Caco-2 (cell line): ENCODE measurements at regions of chr2 and their contacts with region 1.

Region 1: DNA sequence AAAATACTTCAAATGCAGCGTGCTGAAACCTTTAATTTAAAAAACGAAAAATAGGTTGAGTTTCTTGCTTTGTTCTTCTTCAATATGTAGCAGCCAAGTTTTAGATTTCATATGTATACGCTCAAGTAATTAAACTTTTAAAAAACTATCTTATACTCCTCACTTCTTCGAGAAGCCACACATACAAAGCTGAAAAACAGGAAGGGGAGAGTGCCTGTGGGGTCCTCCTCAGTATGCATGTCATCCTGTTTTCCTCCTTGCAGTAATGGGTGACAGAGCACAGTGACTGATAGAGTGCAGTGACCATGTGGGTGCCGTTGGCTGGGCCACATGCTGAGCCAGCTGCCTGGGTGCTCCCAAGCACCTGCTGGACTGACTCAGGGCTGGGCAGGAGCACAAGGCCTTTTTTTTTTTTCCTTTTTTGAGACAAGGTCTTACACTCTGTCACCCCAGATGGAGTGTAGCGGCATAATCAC is 33.3 kb downstream of the UXS1 start:
- DNase-seq: no peak
- H3K4me3 ChIP-seq: no peak overlapping the region
- H3K4me3 Mint-ChIP-seq: no peak overlapping the region
- H3K27ac Mint-ChIP-seq: peak overlapping the region; percentile 91
- H3K4me1 ChIP-seq: peaks cover 51% of the 10 kb centered on the region
- H3K4me1 Mint-ChIP-seq: peaks cover 46% of the 10 kb centered on the region
- H3K27me3 ChIP-seq: no peaks in the 10 kb centered on the region
- H3K27me3 Mint-ChIP-seq: no peaks in the 10 kb centered on the region
- CTCF ChIP-seq: no peak

Region 2: GRCh38 chr2:106124905-106125405 is 35.9 kb before region 1 on chr2:
- CTCF ChIA-PET with region 1: no interaction called
- POLR2A ChIA-PET with region 1: no interaction called
- intact Hi-C with region 1: loop called (anchors 5 kb)
- DNase-seq: peak; percentile 57 to 60
- H3K4me3 ChIP-seq: no peak overlapping the region
- H3K4me3 Mint-ChIP-seq: no peak overlapping the region
- H3K27ac Mint-ChIP-seq: peak overlapping the region; percentile 69
- H3K4me1 ChIP-seq: peaks cover 58% of the 10 kb centered on the region
- H3K4me1 Mint-ChIP-seq: peaks cover 50% of the 10 kb centered on the region
- H3K27me3 ChIP-seq: no peaks in the 10 kb centered on the region
- H3K27me3 Mint-ChIP-seq: no peaks in the 10 kb centered on the region
- CTCF ChIP-seq: no peak

Region 3: GRCh38 chr2:106180602-106181001 is 19.8 kb after region 1 on chr2:
- CTCF ChIA-PET with region 1: no interaction called
- POLR2A ChIA-PET with region 1: no interaction called
- intact Hi-C with region 1: loop called (anchors 1 kb)
- DNase-seq: no peak
- H3K4me3 ChIP-seq: no peak overlapping the region
- H3K4me3 Mint-ChIP-seq: no peak overlapping the region
- H3K27ac Mint-ChIP-seq: no peak overlapping the region
- H3K4me1 ChIP-seq: peaks cover 27% of the 10 kb centered on the region
- H3K4me1 Mint-ChIP-seq: peaks cover 18% of the 10 kb centered on the region
- H3K27me3 ChIP-seq: no peaks in the 10 kb centered on the region
- H3K27me3 Mint-ChIP-seq: no peaks in the 10 kb centered on the region
- CTCF ChIP-seq: no peak

Region 4: DNA sequence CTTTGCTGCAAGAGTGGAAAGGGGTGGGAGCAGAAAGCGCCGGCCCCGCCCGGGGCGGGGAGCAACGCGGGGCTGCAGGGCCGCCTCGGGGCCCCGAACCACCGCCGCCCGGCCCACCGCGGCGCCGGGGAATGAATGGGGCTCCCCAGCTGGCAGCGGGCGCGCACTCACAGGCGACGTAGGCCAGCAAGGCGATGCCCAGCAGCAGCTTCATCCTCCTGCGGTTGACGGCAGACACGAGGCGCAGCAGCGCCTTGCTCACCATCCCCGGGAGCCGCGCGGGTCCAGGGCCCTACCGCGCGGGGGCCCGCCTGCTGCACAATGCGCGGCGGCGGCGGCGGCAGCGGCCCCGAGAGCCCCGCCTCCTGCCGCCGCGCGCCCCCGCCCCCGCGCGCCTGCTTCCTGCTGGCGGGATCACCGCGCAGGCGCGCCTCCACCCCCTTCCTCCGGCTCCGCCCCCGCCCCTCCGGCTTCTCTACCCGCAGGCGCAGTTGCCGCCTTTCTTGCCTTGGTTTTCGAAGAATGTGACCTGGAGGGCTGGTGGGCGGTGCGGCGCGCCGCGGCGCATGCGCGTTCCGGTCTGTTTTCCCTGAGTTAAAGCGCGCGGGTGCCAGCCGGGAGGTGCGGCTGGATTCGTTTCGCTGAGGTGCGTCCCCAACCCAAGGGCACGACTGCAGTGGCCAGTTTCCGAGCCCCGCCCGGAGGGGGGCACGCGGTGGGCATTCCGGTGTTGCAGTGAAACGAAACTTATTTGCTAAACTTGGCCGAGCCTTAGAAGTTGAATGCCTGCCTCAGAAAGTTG is 33.4 kb after region 1 on chr2 and contains the start of gene UXS1:
- CTCF ChIA-PET with region 1: interaction called, 5 read pairs
- POLR2A ChIA-PET with region 1: interaction called, 5 read pairs
- intact Hi-C with region 1: loop called (anchors 1 kb)
- DNase-seq: peak; percentile 98
- H3K4me3 ChIP-seq: peak within 1 kb of the TSS; percentile 91
- H3K4me3 Mint-ChIP-seq: peak within 1 kb of the TSS; percentile 81
- H3K27ac Mint-ChIP-seq: peak within 1 kb of the TSS; percentile 95
- H3K4me1 ChIP-seq: peaks cover 23% of the 10 kb centered on the region
- H3K4me1 Mint-ChIP-seq: peaks cover 42% of the 10 kb centered on the region
- H3K27me3 ChIP-seq: no peaks in the 10 kb centered on the region
- H3K27me3 Mint-ChIP-seq: no peaks in the 10 kb centered on the region
- CTCF ChIP-seq: no peak
- total RNA-seq, gene UXS1: 71.5 and 72.7 TPM in 2 replicates